ENCODE measurements at regions of chr7 and their contacts with region 1.

Region 1: GRCh38 chr7:145036604-145037405 is 201.0 kb upstream of the TPK1 start:
- DNase-seq: peak; percentile 63
- H3K4me3 ChIP-seq: no peak overlapping the region
- H3K27ac ChIP-seq: no peak overlapping the region
- H3K4me1 ChIP-seq: no peaks in the 10 kb centered on the region
- H3K27me3 ChIP-seq: no peaks in the 10 kb centered on the region
- CTCF ChIP-seq: peak; percentile 81

Region 2: DNA sequence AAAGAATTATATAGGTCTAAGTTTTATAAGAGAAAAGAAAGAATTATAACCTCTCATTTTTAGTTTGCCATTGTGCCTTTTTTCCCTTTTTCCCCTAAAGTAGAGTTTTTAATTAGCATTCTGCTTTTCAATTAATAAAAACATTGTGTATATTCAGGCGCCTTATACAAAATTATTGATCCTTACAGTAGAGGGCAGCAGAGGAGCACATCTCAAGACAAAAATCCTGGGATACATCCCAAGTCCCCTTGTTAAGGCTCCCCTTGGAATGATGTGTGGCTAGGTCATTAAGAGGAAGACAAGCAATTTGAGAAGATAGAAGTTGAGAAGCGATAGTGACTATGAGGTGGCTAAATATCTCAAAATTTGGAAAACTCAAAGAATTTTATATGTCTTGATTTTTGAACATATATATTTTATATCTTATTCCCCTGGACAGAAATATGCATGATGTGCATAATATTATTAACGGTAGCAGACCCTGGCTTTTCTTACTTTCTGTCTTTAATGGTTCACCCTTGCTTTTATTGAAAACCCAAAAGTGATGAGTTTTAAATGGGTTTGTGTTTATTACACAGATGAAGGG is 181.9 kb before region 1 on chr7:
- CTCF ChIA-PET with region 1: no interaction called
- POLR2A ChIA-PET with region 1: no interaction called
- intact Hi-C with region 1: loop called (anchors 10 kb)
- DNase-seq: peak; percentile 51
- H3K4me3 ChIP-seq: no peak overlapping the region
- H3K27ac ChIP-seq: no peak overlapping the region
- H3K4me1 ChIP-seq: no peaks in the 10 kb centered on the region
- H3K27me3 ChIP-seq: peaks cover 2% of the 10 kb centered on the region
- CTCF ChIP-seq: peak; percentile 70

Region 3: DNA sequence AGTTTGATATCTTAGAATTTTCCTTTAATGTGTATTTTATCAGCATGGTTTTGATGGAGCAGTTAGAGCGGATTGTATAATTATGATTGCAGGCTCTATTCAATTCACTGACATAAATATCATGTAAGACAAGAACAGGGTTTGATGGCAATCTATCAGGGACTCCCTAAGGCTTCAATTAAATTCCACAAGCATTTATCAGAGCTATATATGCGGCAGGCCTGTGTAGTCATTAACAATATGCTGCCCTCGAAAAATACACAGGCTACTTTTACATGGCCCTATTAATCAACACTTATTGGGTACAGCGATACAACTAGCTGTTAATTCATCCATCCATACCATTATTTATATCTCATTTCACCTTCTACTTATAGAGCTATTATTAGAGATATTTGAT is 157.1 kb after region 1 on chr7:
- CTCF ChIA-PET with region 1: no interaction called
- POLR2A ChIA-PET with region 1: no interaction called
- intact Hi-C with region 1: no loop called
- DNase-seq: no peak
- H3K4me3 ChIP-seq: no peak overlapping the region
- H3K27ac ChIP-seq: no peak overlapping the region
- H3K4me1 ChIP-seq: no peaks in the 10 kb centered on the region
- H3K27me3 ChIP-seq: no peaks in the 10 kb centered on the region
- CTCF ChIP-seq: no peak

Region 4: DNA sequence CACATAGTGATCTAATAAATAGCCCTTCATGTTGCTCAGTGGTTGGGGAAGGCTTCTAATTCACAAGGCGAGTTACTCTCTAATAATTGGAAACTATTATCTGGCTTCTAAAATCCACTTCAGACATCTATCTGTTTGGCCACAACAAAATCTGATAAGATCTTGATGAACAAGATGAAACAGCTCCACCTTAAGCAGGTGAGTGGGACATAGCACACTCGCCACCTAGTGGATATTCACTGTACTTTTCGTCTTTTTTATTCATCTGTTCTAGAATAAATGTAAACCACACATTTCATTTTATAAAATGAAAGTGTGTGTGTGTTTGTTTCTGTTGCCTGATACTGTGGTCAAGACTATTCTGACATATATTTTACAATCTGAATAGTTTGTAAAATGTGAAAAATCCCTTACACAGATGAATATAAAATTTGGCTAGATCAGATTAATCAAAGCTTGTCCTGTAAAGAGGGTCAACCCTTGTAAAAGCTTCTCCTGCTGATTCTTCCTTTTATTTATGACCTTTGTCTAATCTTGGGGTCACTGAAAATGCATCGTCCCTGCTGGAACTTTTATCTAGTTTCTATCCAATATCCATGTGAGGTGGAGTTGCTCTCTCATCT is 1053.3 kb after region 1 on chr7:
- CTCF ChIA-PET with region 1: no interaction called
- POLR2A ChIA-PET with region 1: no interaction called
- intact Hi-C with region 1: loop called (anchors 1 kb)
- DNase-seq: peak; percentile 39
- H3K4me3 ChIP-seq: no peak overlapping the region
- H3K27ac ChIP-seq: no peak overlapping the region
- H3K4me1 ChIP-seq: no peaks in the 10 kb centered on the region
- H3K27me3 ChIP-seq: no peaks in the 10 kb centered on the region
- CTCF ChIP-seq: peak; percentile 73